Endothelial cell of umbilical vein (primary cell): ENCODE measurements at regions of chr3 and their contacts with region 1.

Region 1: GRCh38 chr3:10758304-10759061 is 57.5 kb upstream of the SLC6A11 start:
- DNase-seq: peak; percentile 65
- H3K4me3 ChIP-seq: no peak overlapping the region
- H3K27ac ChIP-seq: no peak overlapping the region
- H3K4me1 ChIP-seq: no peaks in the 10 kb centered on the region
- H3K27me3 ChIP-seq: no peaks in the 10 kb centered on the region
- CTCF ChIP-seq: peak; percentile 61 to 76
- POLR2A ChIP-seq: no peak

Region 2: GRCh38 chr3:10771486-10772270 is 13.2 kb after region 1 on chr3:
- CTCF ChIA-PET with region 1: interaction called, 25 read pairs
- POLR2A ChIA-PET with region 1: no interaction called
- dilution Hi-C with region 1: no loop called
- intact Hi-C with region 1: no loop called
- DNase-seq: no peak
- H3K4me3 ChIP-seq: no peak overlapping the region
- H3K27ac ChIP-seq: no peak overlapping the region
- H3K4me1 ChIP-seq: no peaks in the 10 kb centered on the region
- H3K27me3 ChIP-seq: no peaks in the 10 kb centered on the region
- CTCF ChIP-seq: no peak
- POLR2A ChIP-seq: no peak

Region 3: GRCh38 chr3:10883478-10884234 is 125.2 kb after region 1 on chr3:
- CTCF ChIA-PET with region 1: interaction called, 17 read pairs
- POLR2A ChIA-PET with region 1: no interaction called
- dilution Hi-C with region 1: no loop called
- intact Hi-C with region 1: loop called (anchors 1 kb)
- DNase-seq: peak; percentile 6
- H3K4me3 ChIP-seq: no peak overlapping the region
- H3K27ac ChIP-seq: no peak overlapping the region
- H3K4me1 ChIP-seq: no peaks in the 10 kb centered on the region
- H3K27me3 ChIP-seq: no peaks in the 10 kb centered on the region
- CTCF ChIP-seq: peak; percentile 24 to 32
- POLR2A ChIP-seq: no peak

Region 4: GRCh38 chr3:10983219-10983916 is 224.9 kb after region 1 on chr3:
- CTCF ChIA-PET with region 1: interaction called, 8 read pairs
- POLR2A ChIA-PET with region 1: no interaction called
- dilution Hi-C with region 1: no loop called
- intact Hi-C with region 1: loop called (anchors 1 kb)
- DNase-seq: peak; percentile 53
- H3K4me3 ChIP-seq: no peak overlapping the region
- H3K27ac ChIP-seq: no peak overlapping the region
- H3K4me1 ChIP-seq: peaks cover 3% of the 10 kb centered on the region
- H3K27me3 ChIP-seq: peaks cover 4 to 15% of the 10 kb centered on the region in 2 experiments
- CTCF ChIP-seq: peak; percentile 69 to 74
- POLR2A ChIP-seq: no peak

Region 5: GRCh38 chr3:11037241-11037873 is 278.9 kb after region 1 on chr3:
- CTCF ChIA-PET with region 1: no interaction called
- POLR2A ChIA-PET with region 1: no interaction called
- dilution Hi-C with region 1: no loop called
- intact Hi-C with region 1: no loop called
- DNase-seq: peak; percentile 48
- H3K4me3 ChIP-seq: no peak overlapping the region
- H3K27ac ChIP-seq: no peak overlapping the region
- H3K4me1 ChIP-seq: no peaks in the 10 kb centered on the region
- H3K27me3 ChIP-seq: peaks cover 27 to 28% of the 10 kb centered on the region in 2 experiments
- CTCF ChIP-seq: no peak
- POLR2A ChIP-seq: no peak